CD4-positive, alpha-beta T cell (primary cell): ENCODE measurements at regions of chr9 and their contacts with region 1.

Region 1: GRCh38 chr9:35945341-35946018 is 12.5 kb downstream of the OR2S2 start:
- DNase-seq: peak; percentile 42 to 81 (median 62)
- ATAC-seq: peak; percentile 70
- H3K4me3 ChIP-seq: no peak overlapping the region
- H3K4me3 Mint-ChIP-seq: peak overlapping the region; percentile 57
- H3K27ac ChIP-seq: no peak overlapping the region
- H3K27ac Mint-ChIP-seq: no peak overlapping the region
- H3K4me1 ChIP-seq: peaks cover 65% of the 10 kb centered on the region
- H3K4me1 Mint-ChIP-seq: peaks cover 71% of the 10 kb centered on the region
- H3K27me3 ChIP-seq: no peaks in the 10 kb centered on the region
- H3K27me3 Mint-ChIP-seq: no peaks in the 10 kb centered on the region
- CTCF ChIP-seq: peak; percentile 93

Region 2: DNA sequence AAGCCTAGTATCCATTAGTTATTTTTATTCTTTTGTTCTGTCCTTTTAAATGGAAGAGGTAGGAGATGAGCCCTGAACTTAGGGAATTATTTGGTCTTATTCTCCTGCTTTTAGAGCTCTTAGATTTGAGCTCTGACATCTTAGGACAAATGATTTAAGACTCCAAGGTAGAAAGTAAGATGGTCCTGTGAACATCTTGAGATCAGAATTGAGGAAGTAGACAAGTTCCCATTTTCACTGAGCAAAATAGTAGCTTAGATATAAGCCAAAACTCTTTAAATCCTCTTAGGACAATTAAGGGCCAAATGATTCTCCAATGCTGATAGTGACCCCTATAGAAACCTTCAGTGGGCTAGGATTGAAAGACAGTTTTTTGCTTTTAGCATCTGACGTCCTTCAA is 508.5 kb before region 1 on chr9:
- CTCF ChIA-PET with region 1: no interaction called
- POLR2A ChIA-PET with region 1: no interaction called
- intact Hi-C with region 1: no loop called
- DNase-seq: no peak
- ATAC-seq: no peak
- H3K4me3 ChIP-seq: no peak overlapping the region
- H3K4me3 Mint-ChIP-seq: no peak overlapping the region
- H3K27ac ChIP-seq: no peak overlapping the region
- H3K27ac Mint-ChIP-seq: no peak overlapping the region
- H3K4me1 ChIP-seq: no peaks in the 10 kb centered on the region
- H3K4me1 Mint-ChIP-seq: no peaks in the 10 kb centered on the region
- H3K27me3 ChIP-seq: no peaks in the 10 kb centered on the region
- H3K27me3 Mint-ChIP-seq: peaks cover 2% of the 10 kb centered on the region
- CTCF ChIP-seq: no peak

Region 3: GRCh38 chr9:35903049-35903448 is 42.4 kb before region 1 on chr9:
- CTCF ChIA-PET with region 1: interaction called, 24 read pairs
- POLR2A ChIA-PET with region 1: interaction called, 5 read pairs
- intact Hi-C with region 1: loop called (anchors 1 kb)
- DNase-seq: peak in 6 of 14 experiments; percentile 23 to 80 (median 64)
- ATAC-seq: peak; percentile 84
- H3K4me3 ChIP-seq: no peak overlapping the region
- H3K4me3 Mint-ChIP-seq: no peak overlapping the region
- H3K27ac ChIP-seq: no peak overlapping the region
- H3K27ac Mint-ChIP-seq: no peak overlapping the region
- H3K4me1 ChIP-seq: peaks cover 46% of the 10 kb centered on the region
- H3K4me1 Mint-ChIP-seq: peaks cover 45% of the 10 kb centered on the region
- H3K27me3 ChIP-seq: no peaks in the 10 kb centered on the region
- H3K27me3 Mint-ChIP-seq: peaks cover 3% of the 10 kb centered on the region
- CTCF ChIP-seq: peak; percentile 88

Region 4: DNA sequence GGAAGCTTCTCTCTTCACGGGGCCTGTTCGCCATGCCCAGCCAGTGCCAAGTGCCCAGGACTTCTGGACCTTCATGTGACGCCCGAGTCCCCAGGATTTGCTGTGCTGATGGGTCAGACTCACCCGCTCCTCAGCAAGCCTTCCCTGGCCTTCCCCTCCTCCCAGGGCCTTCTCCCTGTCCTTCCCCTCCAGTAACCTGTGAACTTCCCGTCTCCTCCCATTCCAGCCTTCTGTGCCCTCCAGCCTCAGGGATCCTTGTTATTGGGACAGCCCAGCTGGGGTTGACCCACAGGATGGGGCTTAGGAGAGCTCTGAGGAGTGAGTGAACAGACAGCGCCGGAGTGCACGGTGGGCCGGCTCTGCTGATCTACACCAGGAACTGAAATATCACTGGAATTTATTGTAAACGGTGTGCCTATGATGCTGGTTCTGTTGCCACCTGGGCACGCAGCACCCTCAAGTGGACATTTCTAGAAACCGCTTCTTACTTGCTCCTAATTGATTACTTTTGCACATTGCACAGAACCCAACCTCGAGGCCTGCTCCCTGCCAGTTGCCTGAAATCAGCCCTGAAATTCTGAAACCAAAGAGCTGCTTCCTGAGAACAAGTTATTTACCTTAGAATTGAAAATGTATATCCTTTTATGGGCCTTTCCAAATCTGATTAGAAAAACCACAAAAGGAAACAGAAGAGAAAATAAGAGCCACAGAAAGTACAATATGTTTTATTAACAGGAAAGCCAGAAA is 34.7 kb before region 1 on chr9:
- CTCF ChIA-PET with region 1: interaction called, 3 read pairs
- POLR2A ChIA-PET with region 1: interaction called, 11 read pairs
- intact Hi-C with region 1: loop called in 1 of 2 experiments (anchors 2 kb)
- DNase-seq: peak in 12 of 14 experiments; percentile 27 to 79 (median 38)
- ATAC-seq: peak; percentile 84
- H3K4me3 ChIP-seq: no peak overlapping the region
- H3K4me3 Mint-ChIP-seq: peak overlapping the region; percentile 50
- H3K27ac ChIP-seq: peak overlapping the region; percentile 62 to 78
- H3K27ac Mint-ChIP-seq: peak overlapping the region; percentile 88
- H3K4me1 ChIP-seq: peaks cover 73% of the 10 kb centered on the region
- H3K4me1 Mint-ChIP-seq: peaks cover 57% of the 10 kb centered on the region
- H3K27me3 ChIP-seq: no peaks in the 10 kb centered on the region
- H3K27me3 Mint-ChIP-seq: no peaks in the 10 kb centered on the region
- CTCF ChIP-seq: peak; percentile 56

Region 5: GRCh38 chr9:35976726-35977125 is 31.2 kb after region 1 on chr9:
- CTCF ChIA-PET with region 1: no interaction called
- POLR2A ChIA-PET with region 1: no interaction called
- intact Hi-C with region 1: no loop called
- DNase-seq: no peak
- ATAC-seq: no peak
- H3K4me3 ChIP-seq: no peak overlapping the region
- H3K4me3 Mint-ChIP-seq: no peak overlapping the region
- H3K27ac ChIP-seq: no peak overlapping the region
- H3K27ac Mint-ChIP-seq: no peak overlapping the region
- H3K4me1 ChIP-seq: peaks cover 5% of the 10 kb centered on the region
- H3K4me1 Mint-ChIP-seq: peaks cover 15% of the 10 kb centered on the region
- H3K27me3 ChIP-seq: peaks cover 24 to 44% of the 10 kb centered on the region in 2 experiments
- H3K27me3 Mint-ChIP-seq: peaks cover 85% of the 10 kb centered on the region
- CTCF ChIP-seq: no peak

Region 6: DNA sequence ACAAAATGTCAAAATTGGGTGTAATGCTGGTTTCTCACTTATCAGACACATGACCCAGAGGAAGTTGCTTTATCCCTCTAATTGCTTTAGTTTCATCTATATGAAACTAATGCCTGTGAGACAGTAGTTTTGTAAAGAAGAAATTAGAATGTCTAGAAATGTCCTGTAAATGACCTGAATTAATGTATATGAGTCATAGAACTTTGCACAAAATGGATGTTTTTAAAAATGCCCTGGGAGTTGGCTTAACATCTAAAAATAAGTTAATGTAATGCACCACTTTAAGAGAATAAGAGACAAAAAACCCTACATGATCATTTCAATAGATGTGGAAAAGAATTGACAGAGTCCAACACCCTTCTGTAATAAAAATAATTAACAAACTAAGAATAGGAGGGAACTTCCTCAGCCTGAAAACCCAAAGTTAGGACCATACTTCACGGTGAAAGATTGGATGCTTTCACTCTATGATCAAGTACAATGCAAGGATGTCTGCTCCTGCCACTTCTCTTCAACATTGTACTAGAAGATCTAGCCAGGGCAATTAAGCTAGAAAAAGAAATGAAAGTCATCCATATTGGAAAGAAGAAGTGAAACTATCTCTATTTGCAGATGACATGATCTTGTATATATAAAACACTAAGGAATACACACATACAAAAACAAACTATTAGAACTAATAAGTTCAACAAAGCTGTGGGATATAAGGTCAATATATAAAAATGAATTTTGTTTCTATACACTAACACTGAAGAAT is 745.1 kb after region 1 on chr9:
- CTCF ChIA-PET with region 1: no interaction called
- POLR2A ChIA-PET with region 1: no interaction called
- intact Hi-C with region 1: no loop called
- DNase-seq: no peak
- ATAC-seq: no peak
- H3K4me3 ChIP-seq: no peak overlapping the region
- H3K4me3 Mint-ChIP-seq: no peak overlapping the region
- H3K27ac ChIP-seq: no peak overlapping the region
- H3K27ac Mint-ChIP-seq: no peak overlapping the region
- H3K4me1 ChIP-seq: no peaks in the 10 kb centered on the region
- H3K4me1 Mint-ChIP-seq: no peaks in the 10 kb centered on the region
- H3K27me3 ChIP-seq: no peaks in the 10 kb centered on the region
- H3K27me3 Mint-ChIP-seq: peaks cover 42% of the 10 kb centered on the region
- CTCF ChIP-seq: no peak